Activated CD4-positive, alpha-beta T cell treated with anti-CD3 and anti-CD28 coated beads, Interleukin-2, amount 10 ng/mL, durations not matched to agents 7 days and 5 days (primary cell): ENCODE measurements at regions of chr7 and their contacts with region 1.

Region 1: GRCh38 chr7:36943591-36944435 is 219.5 kb upstream of the AOAH start:
- DNase-seq: no peak
- H3K4me3 Mint-ChIP-seq: no peak overlapping the region
- H3K27ac Mint-ChIP-seq: peak overlapping the region; percentile 77
- H3K4me1 Mint-ChIP-seq: peaks cover 32% of the 10 kb centered on the region
- H3K27me3 Mint-ChIP-seq: no peaks in the 10 kb centered on the region

Region 2: DNA sequence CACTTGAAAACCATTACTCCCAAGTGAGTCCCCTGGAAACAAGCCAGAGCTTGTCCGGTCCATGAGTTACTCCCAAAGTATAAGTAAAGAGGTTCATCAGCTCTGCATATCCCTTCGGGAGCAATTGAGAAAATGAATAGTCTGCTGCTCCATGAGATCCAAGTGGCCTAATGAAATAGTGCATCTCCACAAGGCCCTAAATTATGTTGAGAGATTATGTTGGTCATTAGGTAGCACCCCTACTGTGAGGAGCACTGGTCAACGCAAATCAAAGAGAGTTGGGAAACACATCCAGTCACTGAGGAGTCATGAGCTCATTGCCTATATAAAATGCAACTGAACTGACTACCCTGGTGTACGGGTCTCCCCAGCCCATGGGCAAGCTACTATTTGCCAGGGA is 14.0 kb before region 1 on chr7:
- CTCF ChIA-PET with region 1: interaction called, 10 read pairs
- POLR2A ChIA-PET with region 1: no interaction called
- DNase-seq: no peak
- H3K4me3 Mint-ChIP-seq: no peak overlapping the region
- H3K27ac Mint-ChIP-seq: no peak overlapping the region
- H3K4me1 Mint-ChIP-seq: no peaks in the 10 kb centered on the region
- H3K27me3 Mint-ChIP-seq: no peaks in the 10 kb centered on the region

Region 3: DNA sequence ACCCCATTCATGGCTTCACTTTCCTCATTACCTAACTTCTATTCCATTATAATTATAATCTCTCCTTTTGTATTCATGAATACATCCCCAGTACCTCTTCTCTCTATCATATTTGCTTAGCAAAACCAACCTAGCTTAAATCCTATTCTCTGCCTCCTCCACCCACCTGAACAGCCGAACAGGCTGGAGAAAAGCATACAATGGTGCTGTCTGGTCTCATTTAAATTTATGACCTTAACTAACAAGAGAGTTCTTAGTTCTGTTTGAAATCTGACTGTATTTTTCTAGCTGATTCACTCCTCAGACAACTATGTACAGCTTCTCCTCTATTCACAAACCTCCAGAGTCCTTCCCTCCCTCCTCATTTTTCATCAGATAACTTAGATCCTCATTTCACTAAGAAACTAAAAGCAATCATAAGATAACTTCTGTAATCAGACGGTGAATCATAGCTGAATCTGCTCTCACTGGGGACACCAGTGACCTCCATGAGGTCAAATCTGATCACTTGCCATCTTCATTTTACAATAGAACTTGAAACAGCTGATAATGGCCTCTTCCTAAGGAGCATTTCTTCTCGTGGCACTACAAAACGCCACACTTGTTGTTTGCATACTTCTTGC is 14.4 kb after region 1 on chr7:
- CTCF ChIA-PET with region 1: no interaction called
- POLR2A ChIA-PET with region 1: no interaction called
- DNase-seq: no peak
- H3K4me3 Mint-ChIP-seq: no peak overlapping the region
- H3K27ac Mint-ChIP-seq: no peak overlapping the region
- H3K4me1 Mint-ChIP-seq: no peaks in the 10 kb centered on the region
- H3K27me3 Mint-ChIP-seq: no peaks in the 10 kb centered on the region